Activated CD4-positive, alpha-beta T cell treated with anti-CD3 and anti-CD28 coated beads for 36 hours (primary cell): ENCODE measurements at regions of chr1 and their contacts with region 1.

Region 1: GRCh38 chr1:198253668-198254067 is 96.9 kb downstream of the NEK7 start:
- DNase-seq: peak; percentile 22
- ATAC-seq: peak; percentile 88
- H3K4me3 Mint-ChIP-seq: peak overlapping the region; percentile 16
- H3K27ac Mint-ChIP-seq: peak overlapping the region; percentile 79
- H3K4me1 Mint-ChIP-seq: peaks cover 50% of the 10 kb centered on the region
- H3K27me3 Mint-ChIP-seq: peaks cover 2% of the 10 kb centered on the region

Region 2: GRCh38 chr1:198143797-198144196 is 109.9 kb before region 1 on chr1:
- CTCF ChIA-PET with region 1: no interaction called
- POLR2A ChIA-PET with region 1: no interaction called
- intact Hi-C with region 1: no loop called
- DNase-seq: no peak
- ATAC-seq: peak; percentile 57
- H3K4me3 Mint-ChIP-seq: no peak overlapping the region
- H3K27ac Mint-ChIP-seq: no peak overlapping the region
- H3K4me1 Mint-ChIP-seq: peaks cover 7% of the 10 kb centered on the region
- H3K27me3 Mint-ChIP-seq: no peaks in the 10 kb centered on the region

Region 3: DNA sequence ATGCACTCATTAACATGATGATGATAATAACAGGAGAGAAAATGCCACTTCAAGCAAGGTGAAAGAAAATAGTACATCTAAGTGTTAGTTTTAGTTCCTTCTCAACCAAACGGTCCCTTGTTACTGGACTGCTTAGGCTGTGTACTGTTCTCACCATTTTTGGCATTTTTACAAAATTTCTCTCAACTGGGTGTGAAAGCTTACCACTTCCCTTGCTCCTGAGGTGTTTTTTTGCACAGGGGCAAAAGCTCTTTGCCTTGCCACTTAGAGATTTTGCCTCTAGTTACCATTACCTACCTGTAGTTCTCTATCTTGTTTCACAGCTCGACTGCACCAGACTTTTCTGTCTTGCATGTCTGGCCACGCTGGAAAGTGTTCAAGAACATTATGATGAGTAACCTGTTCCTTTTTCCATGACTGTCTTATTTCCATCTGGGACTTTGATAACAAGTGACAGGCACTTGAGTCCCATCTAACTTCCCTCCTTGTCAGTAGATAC is 86.2 kb before region 1 on chr1:
- CTCF ChIA-PET with region 1: interaction called, 9 read pairs
- POLR2A ChIA-PET with region 1: no interaction called
- intact Hi-C with region 1: loop called (anchors 1 to 2 kb)
- DNase-seq: peak; percentile 42
- ATAC-seq: peak; percentile 18
- H3K4me3 Mint-ChIP-seq: peak overlapping the region; percentile 54
- H3K27ac Mint-ChIP-seq: peak overlapping the region; percentile 93
- H3K4me1 Mint-ChIP-seq: peaks cover 93% of the 10 kb centered on the region
- H3K27me3 Mint-ChIP-seq: no peaks in the 10 kb centered on the region

Region 4: GRCh38 chr1:198187973-198188588 is 65.6 kb before region 1 on chr1:
- CTCF ChIA-PET with region 1: no interaction called
- POLR2A ChIA-PET with region 1: no interaction called
- intact Hi-C with region 1: loop called in 1 of 2 experiments (anchors 5 kb)
- DNase-seq: no peak
- ATAC-seq: peak; percentile 75
- H3K4me3 Mint-ChIP-seq: peak overlapping the region; percentile 19
- H3K27ac Mint-ChIP-seq: peak overlapping the region; percentile 62
- H3K4me1 Mint-ChIP-seq: peaks cover 79% of the 10 kb centered on the region
- H3K27me3 Mint-ChIP-seq: no peaks in the 10 kb centered on the region

Region 5: DNA sequence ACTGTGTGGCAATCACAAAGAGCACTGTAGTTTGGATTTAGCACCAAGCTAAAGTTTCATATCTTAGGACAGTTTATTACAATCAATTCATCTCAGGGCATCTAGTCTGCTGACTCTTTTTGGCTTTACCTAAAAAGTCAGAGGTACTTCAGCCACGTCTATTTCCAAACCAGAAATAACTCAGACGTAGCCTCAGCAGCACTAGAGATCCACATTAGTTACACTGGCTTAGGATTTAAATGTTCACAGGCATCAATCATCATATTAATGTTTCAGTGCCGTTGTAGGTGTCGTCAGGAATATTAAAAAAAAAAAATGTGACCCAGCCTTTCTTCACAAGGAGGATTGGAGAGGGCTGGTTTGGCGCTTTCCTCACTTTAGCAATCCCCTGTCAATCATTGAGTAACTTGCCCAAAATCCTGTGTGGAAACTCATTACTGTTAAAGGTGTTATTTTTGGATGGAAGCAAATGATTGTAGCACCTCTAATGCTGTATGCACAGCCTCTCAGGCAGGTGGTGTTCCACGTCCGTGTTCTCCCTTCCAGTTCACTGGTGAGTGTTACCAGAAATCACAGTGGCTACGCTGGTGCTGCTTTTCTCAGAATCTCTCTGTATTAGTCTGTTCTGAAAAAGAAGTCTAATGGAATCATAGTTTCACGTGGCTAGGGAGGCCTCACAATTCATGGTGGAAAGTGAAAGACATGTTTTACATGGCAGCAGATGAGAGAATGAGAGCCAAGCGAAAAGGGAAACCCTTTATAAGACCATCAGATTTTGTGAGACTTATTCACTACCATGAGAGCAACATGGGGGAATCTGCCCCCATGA is 51.5 kb before region 1 on chr1:
- CTCF ChIA-PET with region 1: no interaction called
- POLR2A ChIA-PET with region 1: no interaction called
- intact Hi-C with region 1: loop called (anchors 1 kb)
- DNase-seq: peak; percentile 73
- ATAC-seq: peak; percentile 93
- H3K4me3 Mint-ChIP-seq: peak overlapping the region; percentile 15
- H3K27ac Mint-ChIP-seq: peak overlapping the region; percentile 86
- H3K4me1 Mint-ChIP-seq: peaks cover 75% of the 10 kb centered on the region
- H3K27me3 Mint-ChIP-seq: no peaks in the 10 kb centered on the region

Region 6: DNA sequence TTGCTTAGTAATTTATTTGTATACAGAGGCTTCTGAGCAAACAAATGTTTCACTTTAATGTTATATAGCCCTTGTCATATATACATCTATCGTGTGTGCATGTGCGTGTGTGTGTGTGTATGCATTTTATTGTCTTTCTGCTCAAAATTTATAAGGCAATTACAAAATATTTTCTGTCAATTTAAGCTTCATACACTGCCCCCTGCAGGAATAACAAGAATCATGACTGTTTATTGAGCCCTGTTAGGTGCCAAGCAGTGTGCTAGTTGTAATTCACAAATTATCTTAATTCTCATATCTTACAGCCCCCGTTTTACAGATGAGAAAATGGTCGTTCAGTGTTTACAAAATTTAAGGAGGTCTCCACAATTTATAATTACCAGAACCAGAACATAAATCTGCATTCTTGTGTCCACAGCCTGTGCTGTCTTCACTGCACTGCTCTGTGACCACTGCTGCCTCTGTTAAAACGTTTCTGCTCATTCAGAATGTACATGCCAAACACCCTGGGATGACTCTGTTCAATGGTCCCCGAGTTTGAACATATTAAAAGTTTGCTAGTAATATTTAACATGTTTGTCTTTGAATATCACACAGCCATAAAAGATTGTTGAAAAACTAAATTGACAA is 105.5 kb after region 1 on chr1:
- CTCF ChIA-PET with region 1: no interaction called
- POLR2A ChIA-PET with region 1: no interaction called
- intact Hi-C with region 1: loop called (anchors 2 to 5 kb)
- DNase-seq: no peak
- ATAC-seq: no peak
- H3K4me3 Mint-ChIP-seq: no peak overlapping the region
- H3K27ac Mint-ChIP-seq: no peak overlapping the region
- H3K4me1 Mint-ChIP-seq: peaks cover 5% of the 10 kb centered on the region
- H3K27me3 Mint-ChIP-seq: no peaks in the 10 kb centered on the region

Region 7: DNA sequence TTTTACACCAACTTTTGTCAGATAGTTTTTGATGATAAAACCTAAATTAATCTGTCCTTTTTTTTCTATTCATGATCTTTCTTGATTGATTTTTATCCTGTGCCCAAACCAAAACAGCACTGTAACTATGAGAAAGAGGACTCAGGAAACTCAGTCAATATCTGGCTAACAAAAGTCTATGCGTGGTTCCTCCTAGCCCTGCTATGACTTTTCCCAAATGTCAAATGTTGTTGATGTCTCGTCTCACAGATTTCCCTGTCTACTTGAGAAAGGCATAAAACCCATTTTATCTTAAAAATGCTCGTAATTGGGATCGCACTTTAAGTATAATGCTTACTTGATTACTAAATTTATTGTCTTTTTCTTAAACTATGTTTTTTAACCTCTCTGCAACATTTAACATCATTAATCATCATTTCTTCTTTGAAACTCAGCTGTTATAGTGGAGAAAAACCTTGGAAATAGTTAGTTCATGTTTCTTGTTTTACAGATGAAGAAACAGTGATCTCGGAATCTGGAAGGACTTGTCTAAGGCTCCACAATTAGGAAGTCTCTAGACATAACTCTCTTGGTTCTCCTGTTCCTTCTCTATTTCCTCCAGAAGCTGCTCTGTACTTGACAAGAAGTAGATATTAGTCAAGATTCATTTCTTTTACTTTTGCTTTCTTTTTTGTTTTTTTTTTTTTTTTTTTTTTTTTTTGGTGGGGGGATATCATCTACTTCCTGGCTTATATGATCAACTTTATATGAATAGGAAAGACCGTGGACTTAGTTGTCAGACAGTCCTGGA is 359.0 kb after region 1 on chr1:
- CTCF ChIA-PET with region 1: no interaction called
- POLR2A ChIA-PET with region 1: no interaction called
- intact Hi-C with region 1: loop called in 1 of 2 experiments (anchors 10 kb)
- DNase-seq: no peak
- ATAC-seq: peak; percentile 48
- H3K4me3 Mint-ChIP-seq: peak overlapping the region; percentile 77
- H3K27ac Mint-ChIP-seq: peak overlapping the region; percentile 99
- H3K4me1 Mint-ChIP-seq: peaks cover 83% of the 10 kb centered on the region
- H3K27me3 Mint-ChIP-seq: no peaks in the 10 kb centered on the region

Region 8: GRCh38 chr1:198922638-198923430 is 669.2 kb after region 1 on chr1:
- CTCF ChIA-PET with region 1: no interaction called
- POLR2A ChIA-PET with region 1: no interaction called
- intact Hi-C with region 1: loop called in 1 of 2 experiments (anchors 5 kb)
- DNase-seq: no peak
- ATAC-seq: peak; percentile 56
- H3K4me3 Mint-ChIP-seq: no peak overlapping the region
- H3K27ac Mint-ChIP-seq: peak overlapping the region; percentile 76
- H3K4me1 Mint-ChIP-seq: peaks cover 74% of the 10 kb centered on the region
- H3K27me3 Mint-ChIP-seq: no peaks in the 10 kb centered on the region